ENCODE measurements at regions of chr6 and their contacts with region 1.

Region 1: GRCh38 chr6:148952147-148953035 is 205.6 kb downstream of the UST start:
- DNase-seq: peak in 2 of 5 donors; percentile 72 to 90
- H3K4me3 ChIP-seq: no peak overlapping the region
- H3K27ac ChIP-seq: no peak overlapping the region
- H3K4me1 ChIP-seq: peaks cover 0 to 2% (median 2%) of the 10 kb centered on the region in 3 donors
- H3K27me3 ChIP-seq: no peaks in the 10 kb centered on the region
- CTCF ChIP-seq: no peak

Region 2: GRCh38 chr6:148580442-148580841 is 371.9 kb before region 1 on chr6:
- intact Hi-C with region 1: loop called (anchors 10 kb)
- DNase-seq: no peak
- H3K4me3 ChIP-seq: no peak overlapping the region
- H3K27ac ChIP-seq: no peak overlapping the region
- H3K4me1 ChIP-seq: peaks cover 0 to 3% (median 0%) of the 10 kb centered on the region in 3 donors
- H3K27me3 ChIP-seq: no peaks in the 10 kb centered on the region
- CTCF ChIP-seq: no peak

Measured in kidney (tissue), 22 donors.